Activated T-helper 2 cell treated with anti-CD3 and anti-CD28 coated beads, Interferon-gamma antibody, Interleukin-2, Interleukin-4, amounts not matched to agents 10 μg/mL and 5 μg/mL and 100 μg/mL, durations not matched to agents 14 hours and 24 hours and 36 hours (primary cell): ENCODE measurements at regions of chr11 and their contacts with region 1.

Region 1: GRCh38 chr11:85779956-85780640 is 30.8 kb downstream of the SYTL2 start:
- DNase-seq: no peak
- H3K4me3 Mint-ChIP-seq: no peak overlapping the region
- H3K27ac Mint-ChIP-seq: peak overlapping the region; percentile 13
- H3K4me1 Mint-ChIP-seq: peaks cover 46% of the 10 kb centered on the region
- H3K27me3 Mint-ChIP-seq: no peaks in the 10 kb centered on the region

Region 2: GRCh38 chr11:85810871-85811611 is 30.9 kb after region 1 on chr11 and contains the start of gene SYTL2:
- intact Hi-C with region 1: loop called (anchors 2 kb)
- DNase-seq: peak; percentile 74
- H3K4me3 Mint-ChIP-seq: peak within 1 kb of the TSS; percentile 82
- H3K27ac Mint-ChIP-seq: peak within 1 kb of the TSS; percentile 52
- H3K4me1 Mint-ChIP-seq: peaks cover 45% of the 10 kb centered on the region
- H3K27me3 Mint-ChIP-seq: peaks cover 3% of the 10 kb centered on the region
- total RNA-seq, gene SYTL2: 16.0 and 17.3 TPM in 2 replicates